Activated naive CD4-positive, alpha-beta T cell treated with anti-CD3 and anti-CD28 coated beads, Interleukin-2, amount 10 ng/mL, durations not matched to agents 7 days and 5 days (primary cell): ENCODE measurements at regions of chr10 and their contacts with region 1.

Region 1: GRCh38 chr10:28381903-28382347 is 79.1 kb upstream of the MPP7 start:
- DNase-seq: peak; percentile 89
- H3K4me3 Mint-ChIP-seq: no peak overlapping the region
- H3K27ac Mint-ChIP-seq: no peak overlapping the region
- H3K4me1 Mint-ChIP-seq: peaks cover 42% of the 10 kb centered on the region
- H3K27me3 Mint-ChIP-seq: peaks cover 9% of the 10 kb centered on the region

Region 2: GRCh38 chr10:28250782-28251181 is 131.1 kb before region 1 on chr10:
- CTCF ChIA-PET with region 1: interaction called, 112 read pairs
- DNase-seq: no peak
- H3K4me3 Mint-ChIP-seq: no peak overlapping the region
- H3K27ac Mint-ChIP-seq: no peak overlapping the region
- H3K4me1 Mint-ChIP-seq: peaks cover 21% of the 10 kb centered on the region
- H3K27me3 Mint-ChIP-seq: no peaks in the 10 kb centered on the region

Region 3: GRCh38 chr10:28312572-28312971 is 69.4 kb before region 1 on chr10:
- CTCF ChIA-PET with region 1: interaction called, 14 read pairs
- DNase-seq: no peak
- H3K4me3 Mint-ChIP-seq: no peak overlapping the region
- H3K27ac Mint-ChIP-seq: no peak overlapping the region
- H3K4me1 Mint-ChIP-seq: peaks cover 11% of the 10 kb centered on the region
- H3K27me3 Mint-ChIP-seq: peaks cover 18% of the 10 kb centered on the region

Region 4: DNA sequence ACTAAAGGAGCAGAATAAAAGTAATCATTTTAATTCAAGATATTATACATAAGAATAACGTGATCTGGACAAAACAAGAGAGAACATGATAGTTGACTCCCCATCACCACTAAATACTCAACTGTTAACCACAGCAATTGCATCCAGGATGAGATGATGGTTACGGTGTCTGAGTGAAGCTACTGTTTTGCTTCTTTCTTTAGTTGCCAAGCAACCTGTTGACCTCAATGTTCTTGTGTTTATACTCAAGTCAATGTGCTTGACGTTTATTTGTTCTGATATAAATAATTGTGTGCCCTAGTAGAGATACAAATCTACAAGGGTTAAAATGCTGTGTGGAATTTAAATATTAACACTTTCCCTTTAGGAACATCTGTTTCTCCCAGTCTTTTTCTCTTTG is 47.6 kb before region 1 on chr10:
- CTCF ChIA-PET with region 1: interaction called, 70 read pairs
- DNase-seq: peak; percentile 57
- H3K4me3 Mint-ChIP-seq: peak overlapping the region; percentile 80
- H3K27ac Mint-ChIP-seq: peak overlapping the region; percentile 99
- H3K4me1 Mint-ChIP-seq: peaks cover 78% of the 10 kb centered on the region
- H3K27me3 Mint-ChIP-seq: peaks cover 4% of the 10 kb centered on the region

Region 5: DNA sequence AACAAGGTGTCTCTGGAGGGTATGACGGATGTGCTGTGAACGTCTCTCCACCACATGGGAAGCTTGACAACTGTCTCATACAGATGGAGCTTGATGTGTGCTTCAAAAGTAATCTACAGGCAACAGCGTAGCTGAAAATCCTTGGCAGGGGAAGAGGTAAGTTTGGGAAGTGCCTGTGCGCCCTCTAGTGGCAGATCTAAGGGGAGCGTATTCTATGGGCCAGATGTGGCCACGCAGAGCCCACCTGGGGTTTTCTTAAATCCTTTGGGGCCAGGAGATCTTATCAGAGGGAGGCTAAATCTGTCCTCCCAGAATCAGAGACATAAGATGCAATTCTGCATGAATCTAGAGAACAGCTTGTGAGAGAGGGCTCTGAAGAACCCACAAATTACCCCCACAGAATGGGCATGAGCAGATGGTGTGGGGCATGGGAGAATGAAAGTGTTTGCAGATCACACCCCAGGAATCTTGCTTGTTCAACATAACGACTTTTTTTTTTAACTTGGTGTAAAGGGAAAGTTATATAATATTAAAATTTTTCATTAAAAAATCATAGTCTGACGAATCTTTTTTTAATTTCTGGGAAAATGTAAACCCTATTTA is 12.1 kb after region 1 on chr10:
- CTCF ChIA-PET with region 1: interaction called, 21 read pairs
- DNase-seq: peak; percentile 78
- H3K4me3 Mint-ChIP-seq: no peak overlapping the region
- H3K27ac Mint-ChIP-seq: no peak overlapping the region
- H3K4me1 Mint-ChIP-seq: peaks cover 4% of the 10 kb centered on the region
- H3K27me3 Mint-ChIP-seq: peaks cover 10% of the 10 kb centered on the region

Region 6: DNA sequence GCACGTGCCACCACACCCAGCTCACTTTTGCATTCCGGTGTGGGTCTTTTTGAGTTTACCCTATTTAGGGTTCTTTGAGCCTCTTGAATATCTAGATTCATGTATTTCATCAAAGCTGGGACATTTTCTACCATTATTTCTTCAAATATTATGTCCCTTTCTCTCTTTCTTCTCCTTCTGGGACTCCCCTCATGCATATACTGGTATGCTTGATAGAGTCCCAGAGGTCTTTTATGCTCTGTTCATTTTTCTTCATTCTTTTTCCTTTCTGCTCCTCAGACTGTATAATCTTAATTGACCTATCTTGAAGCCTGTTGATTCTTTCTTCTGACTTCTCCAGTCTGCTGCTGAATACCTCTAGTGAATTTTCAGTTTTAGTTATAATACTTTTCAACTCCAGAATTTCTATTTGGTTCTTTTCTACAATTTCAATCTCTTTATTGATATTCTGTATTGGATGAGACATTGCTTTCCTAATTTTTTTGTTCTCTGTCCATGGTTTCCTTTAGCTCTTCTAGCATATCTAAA is 141.9 kb after region 1 on chr10:
- CTCF ChIA-PET with region 1: no interaction called
- DNase-seq: no peak
- H3K4me3 Mint-ChIP-seq: no peak overlapping the region
- H3K27ac Mint-ChIP-seq: no peak overlapping the region
- H3K4me1 Mint-ChIP-seq: peaks cover 9% of the 10 kb centered on the region
- H3K27me3 Mint-ChIP-seq: no peaks in the 10 kb centered on the region